ENCODE measurements at regions of chrX and their contacts with region 1.

Region 1: DNA sequence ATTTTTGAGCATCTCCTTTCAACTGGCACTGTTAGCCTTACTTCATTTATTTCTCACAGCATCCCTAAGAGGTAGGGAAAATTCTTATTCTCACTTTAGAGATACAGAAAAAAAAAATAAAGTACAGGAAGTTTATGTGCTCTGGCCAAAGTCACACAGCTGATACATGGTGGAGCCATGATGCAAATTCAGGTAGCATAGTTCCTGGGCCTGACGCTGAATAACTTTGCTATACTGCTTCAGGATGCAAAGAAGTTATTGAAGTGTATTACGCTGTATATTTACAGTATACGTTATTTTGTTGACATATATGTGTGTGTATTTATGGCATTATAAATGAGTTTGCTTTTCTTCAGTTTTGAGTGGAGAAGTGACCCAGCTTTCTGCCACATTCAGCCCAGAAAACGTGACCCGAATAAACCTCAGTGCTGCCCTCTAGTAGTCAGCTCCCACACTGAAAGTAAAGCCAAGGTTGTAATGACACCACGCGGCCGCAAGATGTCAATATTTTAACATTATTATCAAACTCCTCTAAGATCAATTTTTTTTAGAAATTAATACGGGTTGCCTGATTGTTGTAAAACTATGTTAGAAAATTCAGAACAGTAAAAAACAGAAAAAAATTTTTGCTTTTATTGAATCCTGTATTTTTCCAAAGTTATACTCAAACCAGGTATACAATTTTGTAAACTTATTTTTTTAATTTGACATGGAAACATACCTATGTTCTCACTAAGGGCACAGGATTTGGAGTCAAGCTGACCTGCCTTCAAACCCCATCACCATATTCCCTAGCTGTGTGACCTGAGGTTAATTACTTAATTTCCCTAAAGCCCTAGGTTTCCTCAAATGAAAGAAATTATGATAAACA is 3.8 kb upstream of the GUCY2F start:
- DNase-seq: peak; percentile 38 to 80
- ATAC-seq: peak; percentile 84 to 99 (median 90)
- H3K4me3 ChIP-seq: no peak overlapping the region
- H3K4me3 Mint-ChIP-seq: no peak overlapping the region
- H3K27ac ChIP-seq: no peak overlapping the region
- H3K27ac Mint-ChIP-seq: no peak overlapping the region
- H3K4me1 ChIP-seq: no peaks in the 10 kb centered on the region
- H3K4me1 Mint-ChIP-seq: no peaks in the 10 kb centered on the region
- H3K27me3 ChIP-seq: no peaks in the 10 kb centered on the region
- H3K27me3 Mint-ChIP-seq: peaks cover 7 to 9% of the 10 kb centered on the region in 2 donors
- CTCF ChIP-seq: peak; percentile 92

Region 2: GRCh38 chrX:109464231-109464630 is 21.5 kb before region 1 on chrX:
- intact Hi-C with region 1: no loop called
- DNase-seq: no peak
- ATAC-seq: no peak
- H3K4me3 ChIP-seq: no peak overlapping the region
- H3K4me3 Mint-ChIP-seq: no peak overlapping the region
- H3K27ac ChIP-seq: no peak overlapping the region
- H3K27ac Mint-ChIP-seq: no peak overlapping the region
- H3K4me1 ChIP-seq: no peaks in the 10 kb centered on the region
- H3K4me1 Mint-ChIP-seq: no peaks in the 10 kb centered on the region
- H3K27me3 ChIP-seq: no peaks in the 10 kb centered on the region
- H3K27me3 Mint-ChIP-seq: peaks cover 12 to 39% of the 10 kb centered on the region in 2 donors
- CTCF ChIP-seq: no peak

Region 3: GRCh38 chrX:109501176-109501575 is 15.5 kb after region 1 on chrX:
- intact Hi-C with region 1: no loop called
- DNase-seq: no peak
- ATAC-seq: no peak
- H3K4me3 ChIP-seq: no peak overlapping the region
- H3K4me3 Mint-ChIP-seq: no peak overlapping the region
- H3K27ac ChIP-seq: no peak overlapping the region
- H3K27ac Mint-ChIP-seq: no peak overlapping the region
- H3K4me1 ChIP-seq: no peaks in the 10 kb centered on the region
- H3K4me1 Mint-ChIP-seq: no peaks in the 10 kb centered on the region
- H3K27me3 ChIP-seq: no peaks in the 10 kb centered on the region
- H3K27me3 Mint-ChIP-seq: peaks cover 2 to 28% of the 10 kb centered on the region in 2 donors
- CTCF ChIP-seq: no peak

Region 4: DNA sequence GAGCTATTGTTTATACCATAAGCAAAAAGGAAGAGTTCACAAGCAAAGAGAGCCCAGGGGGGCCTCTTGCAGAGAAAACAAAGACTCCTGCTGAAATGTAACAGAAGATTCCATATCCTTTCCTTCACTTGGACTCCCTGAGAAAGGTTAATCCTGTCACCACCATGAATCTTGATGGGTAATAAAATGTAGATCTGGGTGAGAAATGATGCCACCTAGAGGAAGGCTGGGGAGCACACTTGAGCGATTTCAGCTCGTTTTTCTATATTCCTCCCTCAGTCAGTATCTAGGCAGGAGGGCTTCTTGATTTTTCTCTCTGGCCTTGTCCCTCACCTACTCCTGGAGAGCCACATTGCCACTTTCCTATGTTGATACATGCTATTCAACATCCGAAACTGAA is 149.5 kb after region 1 on chrX:
- intact Hi-C with region 1: loop called (anchors 1 kb)
- DNase-seq: peak in 1 of 2 donors; percentile 29
- ATAC-seq: peak in 2 of 3 donors; percentile 59 to 61
- H3K4me3 ChIP-seq: no peak overlapping the region
- H3K4me3 Mint-ChIP-seq: no peak overlapping the region
- H3K27ac ChIP-seq: no peak overlapping the region
- H3K27ac Mint-ChIP-seq: no peak overlapping the region
- H3K4me1 ChIP-seq: no peaks in the 10 kb centered on the region
- H3K4me1 Mint-ChIP-seq: no peaks in the 10 kb centered on the region
- H3K27me3 ChIP-seq: no peaks in the 10 kb centered on the region
- H3K27me3 Mint-ChIP-seq: no peaks in the 10 kb centered on the region
- CTCF ChIP-seq: peak; percentile 53